ENCODE measurements at regions of chr4 and their contacts with region 1.

Region 1: DNA sequence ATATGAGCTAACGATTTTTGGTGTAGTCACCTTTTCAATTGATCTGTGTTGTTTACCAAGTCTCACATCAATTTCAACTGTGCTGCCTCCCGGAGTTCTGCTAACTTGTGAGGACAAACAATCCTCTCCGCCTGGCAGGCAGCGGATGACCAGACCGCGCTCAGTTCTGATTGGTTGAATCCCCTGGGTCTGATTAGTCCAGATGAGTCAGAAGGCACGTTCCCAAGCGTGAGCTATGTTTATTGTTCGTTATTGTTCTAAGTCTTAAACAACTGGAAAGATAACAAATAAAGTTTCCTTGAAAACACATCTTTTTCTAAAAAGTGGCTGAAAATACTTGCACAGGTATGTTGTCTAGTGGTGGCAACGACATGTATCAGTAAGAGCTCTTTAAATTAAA is 37.9 kb upstream of the TRPC3 start:
- DNase-seq: no peak
- H3K4me3 ChIP-seq: no peak overlapping the region
- H3K27ac ChIP-seq: no peak overlapping the region
- H3K4me1 ChIP-seq: no peaks in the 10 kb centered on the region
- H3K27me3 ChIP-seq: no peaks in the 10 kb centered on the region
- CTCF ChIP-seq: no peak
- EP300 ChIP-seq: no peak
- POLR2A ChIP-seq: no peak
- RAD21 ChIP-seq: no peak

Region 2: DNA sequence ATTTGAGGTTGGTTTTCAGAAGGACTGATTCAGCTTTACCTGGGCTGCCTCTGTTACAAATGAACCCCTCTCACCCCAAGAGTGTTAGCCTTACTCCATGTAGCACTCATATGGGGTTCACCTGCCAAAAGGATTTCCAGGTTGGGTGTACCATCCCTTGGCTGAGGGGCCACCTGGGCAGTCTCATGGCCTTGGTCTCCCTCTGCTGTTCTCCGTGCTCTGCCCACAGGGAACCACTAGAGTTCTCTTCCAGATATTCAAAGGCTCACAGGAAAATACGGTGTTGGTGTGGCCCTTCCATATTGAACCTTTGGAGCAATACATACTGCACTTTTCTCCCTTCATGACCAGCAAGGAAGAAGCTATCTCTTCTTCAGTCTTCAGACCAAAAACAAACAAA is 1049.2 kb before region 1 on chr4:
- CTCF ChIA-PET with region 1: no interaction called
- POLR2A ChIA-PET with region 1: no interaction called
- DNase-seq: no peak
- H3K4me3 ChIP-seq: no peak overlapping the region
- H3K27ac ChIP-seq: no peak overlapping the region
- H3K4me1 ChIP-seq: no peaks in the 10 kb centered on the region
- H3K27me3 ChIP-seq: no peaks in the 10 kb centered on the region
- CTCF ChIP-seq: 0 out of 4 replicates have a peak, but pooled peaks of 1 of the 3 experiments have one; percentile 3
- EP300 ChIP-seq: no peak
- POLR2A ChIP-seq: no peak
- RAD21 ChIP-seq: peak; percentile 29 to 40

Region 3: DNA sequence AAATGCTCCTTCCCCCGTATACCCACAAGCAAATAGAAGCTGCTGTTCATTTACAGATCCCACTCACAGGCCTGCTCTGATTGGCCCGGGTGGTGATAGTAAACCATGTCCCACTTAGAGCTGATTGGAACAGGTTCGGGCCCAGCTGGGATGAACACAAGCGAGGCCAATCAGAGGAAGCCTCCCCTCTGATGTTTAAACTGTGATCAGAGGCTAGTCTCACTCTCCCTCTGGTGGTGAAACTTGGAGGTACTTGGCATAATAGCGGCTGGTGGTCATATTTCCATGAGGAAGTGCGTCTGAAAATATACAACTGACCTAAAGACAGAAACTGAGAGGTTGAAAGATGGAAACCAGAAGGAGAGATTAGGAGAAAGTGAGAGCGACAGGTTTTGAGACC is 13.6 kb after region 1 on chr4:
- CTCF ChIA-PET with region 1: interaction called, 15 read pairs
- POLR2A ChIA-PET with region 1: interaction called, 3 read pairs
- DNase-seq: peak; percentile 33 to 67
- H3K4me3 ChIP-seq: no peak overlapping the region
- H3K27ac ChIP-seq: no peak overlapping the region
- H3K4me1 ChIP-seq: no peaks in the 10 kb centered on the region
- H3K27me3 ChIP-seq: no peaks in the 10 kb centered on the region
- CTCF ChIP-seq: peak; percentile 23 to 74 (median 59)
- EP300 ChIP-seq: no peak
- POLR2A ChIP-seq: no peak
- RAD21 ChIP-seq: peak; percentile 64 to 70

Measured in H1 (cell line).